Activated CD8-positive, alpha-beta memory T cell treated with anti-CD3 and anti-CD28 coated beads, Interleukin-2, amount 10 ng/mL, durations not matched to agents 7 days and 5 days (primary cell): ENCODE measurements at regions of chr17 and their contacts with region 1.

Region 1: GRCh38 chr17:1365445-1366039 is 34.5 kb downstream of the YWHAE start:
- DNase-seq: peak; percentile 71
- ATAC-seq: peak; percentile 56
- H3K4me3 Mint-ChIP-seq: no peak overlapping the region
- H3K27ac Mint-ChIP-seq: no peak overlapping the region
- H3K4me1 Mint-ChIP-seq: peaks cover 68% of the 10 kb centered on the region
- H3K27me3 Mint-ChIP-seq: no peaks in the 10 kb centered on the region

Region 2: GRCh38 chr17:1147661-1148060 is 217.9 kb before region 1 on chr17:
- CTCF ChIA-PET with region 1: no interaction called
- DNase-seq: no peak
- ATAC-seq: no peak
- H3K4me3 Mint-ChIP-seq: no peak overlapping the region
- H3K27ac Mint-ChIP-seq: no peak overlapping the region
- H3K4me1 Mint-ChIP-seq: no peaks in the 10 kb centered on the region
- H3K27me3 Mint-ChIP-seq: no peaks in the 10 kb centered on the region

Region 3: GRCh38 chr17:1260086-1260769 is 105.3 kb before region 1 on chr17:
- CTCF ChIA-PET with region 1: interaction called, 16 read pairs
- DNase-seq: no peak
- ATAC-seq: no peak
- H3K4me3 Mint-ChIP-seq: no peak overlapping the region
- H3K27ac Mint-ChIP-seq: no peak overlapping the region
- H3K4me1 Mint-ChIP-seq: peaks cover 42% of the 10 kb centered on the region
- H3K27me3 Mint-ChIP-seq: peaks cover 26% of the 10 kb centered on the region

Region 4: GRCh38 chr17:1390433-1391367 is 25.2 kb after region 1 on chr17:
- CTCF ChIA-PET with region 1: interaction called, 25 read pairs
- DNase-seq: no peak
- ATAC-seq: no peak
- H3K4me3 Mint-ChIP-seq: no peak overlapping the region
- H3K27ac Mint-ChIP-seq: peak overlapping the region; percentile 50
- H3K4me1 Mint-ChIP-seq: peaks cover 63% of the 10 kb centered on the region
- H3K27me3 Mint-ChIP-seq: no peaks in the 10 kb centered on the region

Region 5: GRCh38 chr17:1455797-1456599 is 90.5 kb after region 1 on chr17 and contains the start of gene CRK:
- CTCF ChIA-PET with region 1: interaction called, 11 read pairs
- DNase-seq: peak; percentile 97
- ATAC-seq: peak; percentile 96
- H3K4me3 Mint-ChIP-seq: peak within 1 kb of the TSS; percentile 88
- H3K27ac Mint-ChIP-seq: peak within 1 kb of the TSS; percentile 87
- H3K4me1 Mint-ChIP-seq: peaks cover 36% of the 10 kb centered on the region
- H3K27me3 Mint-ChIP-seq: peaks cover 20% of the 10 kb centered on the region
- total RNA-seq, gene CRK: 18.3 to 20.7 TPM

Region 6: GRCh38 chr17:1516388-1517161 is 151.0 kb after region 1 on chr17 and contains the start of gene INPP5K:
- CTCF ChIA-PET with region 1: interaction called, 103 read pairs
- DNase-seq: peak; percentile 99
- ATAC-seq: peak; percentile 95
- H3K4me3 Mint-ChIP-seq: peak within 1 kb of the TSS; percentile 81
- H3K27ac Mint-ChIP-seq: peak within 1 kb of the TSS; percentile 90
- H3K4me1 Mint-ChIP-seq: peaks cover 22% of the 10 kb centered on the region
- H3K27me3 Mint-ChIP-seq: no peaks in the 10 kb centered on the region
- total RNA-seq, gene INPP5K: 40.6 to 43.4 TPM

Region 7: DNA sequence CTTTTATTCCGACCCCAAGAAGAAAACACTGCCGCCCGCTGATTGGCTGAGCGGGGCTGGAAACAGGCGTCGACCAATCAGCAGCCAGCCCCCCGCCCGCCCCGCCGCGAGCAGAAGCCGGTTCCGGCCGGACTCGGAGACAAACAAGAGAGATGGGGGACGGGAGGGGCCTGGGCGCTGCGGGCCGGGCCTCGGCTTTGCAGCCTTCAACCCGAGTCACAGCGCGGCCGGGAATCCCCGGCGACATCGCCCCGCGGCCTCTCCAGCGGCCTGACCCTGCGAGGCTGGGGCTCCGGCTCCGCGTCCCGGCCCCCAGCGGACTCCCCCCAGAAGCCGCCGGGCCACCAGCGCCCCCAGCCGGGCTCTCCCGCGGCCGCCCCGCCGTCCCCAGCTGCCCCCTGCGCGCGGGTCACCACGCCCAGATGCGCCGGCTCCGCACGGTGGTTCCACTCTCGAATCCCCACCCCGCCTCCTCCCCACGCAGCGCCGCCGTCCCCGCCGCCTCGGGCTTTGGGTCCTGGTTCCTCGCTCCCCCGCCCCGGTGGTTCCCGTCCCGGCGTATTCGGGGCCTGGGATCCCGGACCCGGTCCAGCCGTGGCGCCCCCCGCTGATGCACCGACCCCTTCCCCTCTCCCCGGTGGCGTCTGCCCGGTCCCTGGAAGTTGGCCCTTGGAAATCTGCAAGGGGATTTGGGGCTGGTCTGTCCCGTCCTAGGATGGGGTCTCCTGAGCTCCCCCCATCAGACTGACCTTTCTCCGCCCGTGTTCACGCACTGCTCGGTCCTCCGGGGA is 263.5 kb after region 1 on chr17:
- CTCF ChIA-PET with region 1: interaction called, 34 read pairs
- DNase-seq: peak; percentile 94
- ATAC-seq: peak; percentile 83
- H3K4me3 Mint-ChIP-seq: peak overlapping the region; percentile 81
- H3K27ac Mint-ChIP-seq: peak overlapping the region; percentile 72
- H3K4me1 Mint-ChIP-seq: peaks cover 7% of the 10 kb centered on the region
- H3K27me3 Mint-ChIP-seq: peaks cover 38% of the 10 kb centered on the region